GM12878 (cell line): ENCODE measurements at regions of chr7 and their contacts with region 1.

Region 1: GRCh38 chr7:140003913-140004382 is 58.8 kb downstream of the PARP12 start:
- DNase-seq: peak; percentile 16
- ATAC-seq: peak; percentile 77
- H3K4me3 ChIP-seq: no peak overlapping the region
- H3K27ac ChIP-seq: no peak overlapping the region
- H3K4me1 ChIP-seq: no peaks in the 10 kb centered on the region
- H3K27me3 ChIP-seq: no peaks in the 10 kb centered on the region
- CTCF ChIP-seq: peak; percentile 58 to 69 (median 62)
- EP300 ChIP-seq: no peak
- POLR2A ChIP-seq: no peak
- RAD21 ChIP-seq: peak; percentile 86

Region 2: DNA sequence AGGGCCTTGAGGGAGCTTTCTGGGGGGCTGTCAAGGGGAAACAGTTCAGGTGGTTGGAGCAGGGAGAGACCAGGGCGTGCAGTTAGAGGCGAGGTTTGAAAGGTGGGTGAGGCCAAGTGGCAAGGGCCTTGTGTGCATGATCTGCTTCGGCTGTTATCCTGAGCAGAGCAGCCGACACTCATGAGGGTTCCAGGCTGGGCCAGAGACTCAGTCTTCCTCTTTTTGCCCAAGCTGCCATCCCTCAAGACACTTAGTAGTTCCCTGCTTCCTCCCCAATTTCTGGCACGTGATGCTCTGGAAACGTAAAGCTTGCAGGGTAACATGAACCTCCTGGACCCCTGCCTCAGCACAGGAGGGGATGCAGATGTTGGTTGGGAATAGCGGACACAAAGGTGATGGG is 564.6 kb before region 1 on chr7:
- CTCF ChIA-PET with region 1: interaction called, 17 read pairs
- POLR2A ChIA-PET with region 1: no interaction called
- RAD21 ChIA-PET with region 1: interaction called, 6 read pairs
- SMC1A ChIA-PET with region 1: interaction called, 3 read pairs
- in situ Hi-C with region 1: loop called (anchors 5 kb)
- intact Hi-C with region 1: loop called (anchors 2 kb)
- DNase-seq: no peak
- ATAC-seq: no peak
- H3K4me3 ChIP-seq: no peak overlapping the region
- H3K27ac ChIP-seq: no peak overlapping the region
- H3K4me1 ChIP-seq: no peaks in the 10 kb centered on the region
- H3K27me3 ChIP-seq: no peaks in the 10 kb centered on the region
- CTCF ChIP-seq: no peak
- EP300 ChIP-seq: no peak
- POLR2A ChIP-seq: no peak
- RAD21 ChIP-seq: no peak

Region 3: DNA sequence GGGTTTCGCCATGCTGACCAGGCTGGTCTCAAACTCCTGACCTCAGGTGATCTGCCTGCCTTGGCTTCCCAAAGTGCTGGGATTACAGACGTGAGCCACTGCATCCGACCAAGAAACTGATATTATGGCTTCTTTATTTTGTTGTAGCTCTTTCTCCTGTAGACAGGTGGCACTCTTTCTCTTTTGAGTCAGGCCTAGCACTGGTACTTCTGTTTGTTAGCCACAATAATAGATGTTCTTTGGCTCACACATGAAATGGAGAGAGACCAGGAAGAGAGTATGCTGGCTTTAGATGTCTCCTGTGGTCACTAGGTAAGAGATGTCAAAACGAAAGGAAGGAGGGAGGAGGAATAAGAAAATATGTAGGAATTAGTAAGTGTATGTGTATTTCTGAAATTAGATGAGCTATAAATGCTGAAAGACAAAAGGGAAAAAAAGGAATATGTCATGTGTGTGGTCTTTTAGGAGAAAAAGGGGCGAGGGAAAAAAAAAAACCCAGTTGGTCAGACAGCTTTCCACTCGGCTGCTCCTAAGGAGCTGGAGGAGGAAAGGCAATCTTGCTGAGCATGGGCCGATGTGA is 401.7 kb before region 1 on chr7:
- CTCF ChIA-PET with region 1: interaction called, 88 read pairs
- POLR2A ChIA-PET with region 1: interaction called, 3 read pairs
- RAD21 ChIA-PET with region 1: interaction called, 19 read pairs
- SMC1A ChIA-PET with region 1: interaction called, 12 read pairs
- in situ Hi-C with region 1: no loop called
- intact Hi-C with region 1: loop called (anchors 1 kb)
- DNase-seq: no peak
- ATAC-seq: peak; percentile 87
- H3K4me3 ChIP-seq: no peak overlapping the region
- H3K27ac ChIP-seq: no peak overlapping the region
- H3K4me1 ChIP-seq: no peaks in the 10 kb centered on the region
- H3K27me3 ChIP-seq: no peaks in the 10 kb centered on the region
- CTCF ChIP-seq: peak; percentile 41 to 59 (median 57)
- EP300 ChIP-seq: no peak
- POLR2A ChIP-seq: no peak
- RAD21 ChIP-seq: peak; percentile 56

Region 4: GRCh38 chr7:139767561-139767982 is 236.4 kb before region 1 on chr7:
- CTCF ChIA-PET with region 1: interaction called, 5 read pairs
- POLR2A ChIA-PET with region 1: no interaction called
- RAD21 ChIA-PET with region 1: no interaction called
- SMC1A ChIA-PET with region 1: no interaction called
- in situ Hi-C with region 1: loop called (anchors 5 kb)
- intact Hi-C with region 1: no loop called
- DNase-seq: peak; percentile 48
- ATAC-seq: peak; percentile 79
- H3K4me3 ChIP-seq: no peak overlapping the region
- H3K27ac ChIP-seq: peak overlapping the region; percentile 35; the same call in 1 of the 2 replicates
- H3K4me1 ChIP-seq: peaks cover 31% of the 10 kb centered on the region
- H3K27me3 ChIP-seq: no peaks in the 10 kb centered on the region
- CTCF ChIP-seq: no peak
- EP300 ChIP-seq: no peak
- POLR2A ChIP-seq: no peak
- RAD21 ChIP-seq: no peak

Region 5: GRCh38 chr7:139829025-139829774 is 174.7 kb before region 1 on chr7 and contains the start of gene TBXAS1:
- CTCF ChIA-PET with region 1: interaction called, 3 read pairs
- POLR2A ChIA-PET with region 1: no interaction called
- RAD21 ChIA-PET with region 1: interaction called, 3 read pairs
- SMC1A ChIA-PET with region 1: interaction called, 4 read pairs
- in situ Hi-C with region 1: no loop called
- intact Hi-C with region 1: loop called (anchors 5 kb)
- DNase-seq: no peak
- ATAC-seq: peak; percentile 74
- H3K4me3 ChIP-seq: peak within 1 kb of the TSS; percentile 54
- H3K27ac ChIP-seq: peak within 1 kb of the TSS; percentile 81
- H3K4me1 ChIP-seq: peaks cover 26% of the 10 kb centered on the region
- H3K27me3 ChIP-seq: peaks cover 0 to 1% of the 10 kb centered on the region in 2 experiments; a peak in 1 of 4 replicates
- CTCF ChIP-seq: no peak
- EP300 ChIP-seq: no peak
- POLR2A ChIP-seq: peak; percentile 63; the same call in 1 of the 2 replicates
- RAD21 ChIP-seq: no peak
- polyA plus RNA-seq, gene TBXAS1: 6.8 to 8.3 TPM

Region 6: GRCh38 chr7:140156460-140157080 is 152.6 kb after region 1 on chr7:
- CTCF ChIA-PET with region 1: no interaction called
- POLR2A ChIA-PET with region 1: no interaction called
- RAD21 ChIA-PET with region 1: no interaction called
- SMC1A ChIA-PET with region 1: no interaction called
- in situ Hi-C with region 1: no loop called
- intact Hi-C with region 1: no loop called
- DNase-seq: no peak
- ATAC-seq: no peak
- H3K4me3 ChIP-seq: no peak overlapping the region
- H3K27ac ChIP-seq: no peak overlapping the region
- H3K4me1 ChIP-seq: no peaks in the 10 kb centered on the region
- H3K27me3 ChIP-seq: no peaks in the 10 kb centered on the region
- CTCF ChIP-seq: no peak
- EP300 ChIP-seq: no peak
- POLR2A ChIP-seq: no peak
- RAD21 ChIP-seq: no peak

Region 7: DNA sequence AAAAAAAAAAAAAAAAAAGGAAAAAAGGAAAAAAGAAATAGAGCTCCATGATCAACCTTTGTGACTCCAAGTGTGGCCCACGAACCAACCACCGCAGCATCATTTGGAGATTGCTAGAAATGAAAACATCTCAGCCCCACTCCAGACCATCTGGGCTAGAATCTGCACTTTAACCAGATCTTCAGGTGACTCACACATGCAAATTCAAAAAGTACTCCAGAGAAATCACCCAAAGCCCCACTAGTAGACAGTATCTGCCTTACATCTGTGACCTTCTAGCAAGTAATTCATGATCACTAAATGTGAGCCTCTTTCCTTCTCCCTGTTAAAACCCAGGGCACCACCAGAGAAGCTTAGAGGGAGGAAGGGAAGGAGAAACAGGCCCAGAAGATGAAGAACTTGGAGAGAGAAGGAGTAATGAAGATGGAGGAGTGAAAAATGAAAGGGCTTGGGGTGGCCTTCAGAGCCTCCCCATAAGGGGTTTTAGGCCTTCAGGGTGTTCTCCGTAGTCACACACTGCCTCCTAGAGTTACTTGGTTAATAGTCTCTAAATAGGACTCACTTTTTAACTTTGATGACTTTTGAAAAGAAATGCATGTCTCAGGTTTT is 300.3 kb after region 1 on chr7:
- CTCF ChIA-PET with region 1: no interaction called
- POLR2A ChIA-PET with region 1: no interaction called
- RAD21 ChIA-PET with region 1: interaction called, 3 read pairs
- SMC1A ChIA-PET with region 1: interaction called, 3 read pairs
- in situ Hi-C with region 1: no loop called
- intact Hi-C with region 1: loop called (anchors 1 kb)
- DNase-seq: peak; percentile 11
- ATAC-seq: peak; percentile 81
- H3K4me3 ChIP-seq: no peak overlapping the region
- H3K27ac ChIP-seq: no peak overlapping the region
- H3K4me1 ChIP-seq: no peaks in the 10 kb centered on the region
- H3K27me3 ChIP-seq: no peaks in the 10 kb centered on the region; a peak in 2 of 4 replicates
- CTCF ChIP-seq: peak; percentile 33 to 54 (median 52); a peak in 4 of 6 replicates
- EP300 ChIP-seq: no peak
- POLR2A ChIP-seq: no peak
- RAD21 ChIP-seq: peak; percentile 69